Activated naive CD8-positive, alpha-beta T cell treated with anti-CD3 and anti-CD28 coated beads, Interleukin-2, amount 10 ng/mL, durations not matched to agents 7 days and 5 days (primary cell): ENCODE measurements at regions of chr1 and their contacts with region 1.

Region 1: DNA sequence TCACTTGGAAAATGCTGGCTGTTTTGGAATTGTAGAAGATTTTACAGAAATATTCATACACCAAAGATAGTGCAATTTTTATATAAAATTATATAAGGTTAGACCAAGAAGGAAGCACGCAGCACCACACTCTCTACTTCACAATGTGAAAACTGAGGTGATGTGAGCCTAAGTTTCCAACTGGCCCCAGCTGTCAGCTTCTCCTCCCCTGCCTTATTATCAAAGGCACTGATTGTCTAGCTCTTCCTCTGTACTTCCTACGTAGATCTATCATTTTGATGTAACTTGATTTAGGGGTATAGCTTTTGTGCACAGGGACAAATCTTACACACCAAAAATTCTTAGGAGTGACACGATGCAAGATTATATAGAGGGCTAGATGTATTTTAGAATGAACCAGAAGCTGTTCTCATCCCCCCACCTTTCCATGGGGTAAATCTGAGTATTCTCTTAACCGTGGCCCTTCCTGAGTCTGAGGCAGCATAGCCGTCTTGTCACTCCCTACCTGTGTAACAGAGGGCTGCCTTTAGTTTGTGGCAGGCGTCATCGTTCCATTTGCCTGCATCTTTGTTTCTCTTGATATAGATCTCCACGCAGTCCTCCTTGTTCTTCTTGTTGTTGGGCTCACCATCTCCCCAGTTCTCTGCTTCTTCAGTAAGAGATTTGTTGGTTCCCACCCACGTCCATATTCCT is 3.4 kb downstream of the SELL start:
- DNase-seq: no peak
- ATAC-seq: peak; percentile 23
- H3K4me3 Mint-ChIP-seq: peak overlapping the region; percentile 88
- H3K27ac Mint-ChIP-seq: peak overlapping the region; percentile 93
- H3K4me1 Mint-ChIP-seq: peaks cover 53% of the 10 kb centered on the region
- H3K27me3 Mint-ChIP-seq: no peaks in the 10 kb centered on the region

Region 2: DNA sequence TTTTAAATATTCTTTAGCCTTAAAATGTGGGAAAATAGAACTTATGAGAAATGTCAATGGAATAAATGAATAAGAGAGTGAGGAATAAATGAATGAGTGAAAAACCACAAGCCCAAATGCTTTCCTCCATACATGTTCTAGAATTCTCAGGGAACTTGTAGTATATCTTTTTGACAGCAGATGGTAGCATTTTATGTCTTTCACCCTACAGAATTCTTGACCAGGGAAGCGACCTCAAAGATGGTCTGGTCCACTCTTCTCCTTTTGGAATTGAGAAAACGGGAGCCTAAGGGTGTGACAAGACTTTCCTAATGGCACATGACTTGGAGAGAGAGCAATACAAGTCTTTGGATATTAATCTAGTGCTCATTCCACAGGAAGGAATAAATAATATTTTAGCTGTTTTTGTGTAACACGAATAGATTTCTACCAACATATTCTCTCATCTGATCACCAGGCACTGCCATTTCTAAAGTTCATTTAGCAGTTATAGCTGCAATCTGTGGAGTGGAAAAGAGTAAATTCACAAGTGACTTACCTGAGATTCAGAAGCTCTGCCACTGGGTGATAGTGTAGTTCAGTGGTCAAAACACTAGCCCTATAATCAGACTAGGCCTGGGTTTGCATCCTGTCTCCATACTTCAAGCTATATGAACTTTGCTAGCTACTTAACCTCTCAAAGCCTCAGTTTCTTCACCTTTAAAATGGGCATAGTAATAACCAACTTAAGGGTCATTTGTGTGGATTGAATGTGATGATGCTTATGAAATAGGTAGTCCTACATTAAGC is 106.8 kb before region 1 on chr1:
- POLR2A ChIA-PET with region 1: interaction called, 10 read pairs
- DNase-seq: no peak
- ATAC-seq: no peak
- H3K4me3 Mint-ChIP-seq: no peak overlapping the region
- H3K27ac Mint-ChIP-seq: peak overlapping the region; percentile 35
- H3K4me1 Mint-ChIP-seq: peaks cover 33% of the 10 kb centered on the region
- H3K27me3 Mint-ChIP-seq: no peaks in the 10 kb centered on the region